K562 (cell line): ENCODE measurements at regions of chr9 and their contacts with region 1.

Region 1: DNA sequence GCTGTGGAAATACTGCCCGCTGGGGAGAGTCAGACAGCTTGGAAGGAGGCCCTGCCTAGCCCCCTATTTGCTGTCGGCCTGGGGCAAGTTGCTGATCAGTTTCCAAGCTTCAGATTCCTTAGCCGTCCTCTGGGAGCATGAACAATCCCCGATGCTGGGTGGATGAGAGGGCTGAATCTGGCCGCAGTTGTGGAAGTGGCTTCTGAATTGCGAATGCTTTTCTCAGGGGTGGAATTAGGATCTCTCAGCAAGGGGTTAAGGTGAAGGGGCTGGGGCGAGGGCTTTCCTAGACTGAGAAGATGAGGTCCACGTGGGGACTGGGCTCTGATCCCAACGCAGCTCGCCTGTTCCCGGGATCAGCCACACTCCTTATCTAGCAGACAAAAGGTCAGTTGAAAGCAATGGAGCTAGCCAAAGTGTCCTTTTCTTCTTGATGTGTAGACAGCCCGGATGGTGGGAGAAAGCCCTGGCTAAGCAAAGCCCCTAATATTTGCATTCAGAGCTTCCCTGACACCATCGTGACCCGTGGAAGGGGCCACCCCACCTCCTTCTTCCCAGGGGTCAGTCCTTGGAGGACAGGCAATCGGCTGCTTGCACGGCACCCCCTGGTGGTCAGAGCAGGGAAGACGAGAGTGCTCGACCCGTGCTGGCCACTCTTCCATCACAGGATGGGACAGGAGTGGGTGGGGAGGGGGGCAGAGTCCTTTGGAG is 54.9 kb downstream of the COL15A1 start:
- DNase-seq: peak; percentile 83 to 87 (median 86)
- ATAC-seq: peak; percentile 98
- H3K4me3 ChIP-seq: no peak overlapping the region
- H3K27ac ChIP-seq: no peak overlapping the region
- H3K4me1 ChIP-seq: peaks cover 24 to 27% of the 10 kb centered on the region in 2 experiments
- H3K27me3 ChIP-seq: 0 out of 5 replicates have a peak, but pooled peaks cover 0 to 4% of the 10 kb centered on the region in 2 experiments
- CTCF ChIP-seq: peak; percentile 85 to 96 (median 93)
- EP300 ChIP-seq: no peak
- POLR2A ChIP-seq: no peak
- RAD21 ChIP-seq: peak; percentile 92 to 97

Region 2: DNA sequence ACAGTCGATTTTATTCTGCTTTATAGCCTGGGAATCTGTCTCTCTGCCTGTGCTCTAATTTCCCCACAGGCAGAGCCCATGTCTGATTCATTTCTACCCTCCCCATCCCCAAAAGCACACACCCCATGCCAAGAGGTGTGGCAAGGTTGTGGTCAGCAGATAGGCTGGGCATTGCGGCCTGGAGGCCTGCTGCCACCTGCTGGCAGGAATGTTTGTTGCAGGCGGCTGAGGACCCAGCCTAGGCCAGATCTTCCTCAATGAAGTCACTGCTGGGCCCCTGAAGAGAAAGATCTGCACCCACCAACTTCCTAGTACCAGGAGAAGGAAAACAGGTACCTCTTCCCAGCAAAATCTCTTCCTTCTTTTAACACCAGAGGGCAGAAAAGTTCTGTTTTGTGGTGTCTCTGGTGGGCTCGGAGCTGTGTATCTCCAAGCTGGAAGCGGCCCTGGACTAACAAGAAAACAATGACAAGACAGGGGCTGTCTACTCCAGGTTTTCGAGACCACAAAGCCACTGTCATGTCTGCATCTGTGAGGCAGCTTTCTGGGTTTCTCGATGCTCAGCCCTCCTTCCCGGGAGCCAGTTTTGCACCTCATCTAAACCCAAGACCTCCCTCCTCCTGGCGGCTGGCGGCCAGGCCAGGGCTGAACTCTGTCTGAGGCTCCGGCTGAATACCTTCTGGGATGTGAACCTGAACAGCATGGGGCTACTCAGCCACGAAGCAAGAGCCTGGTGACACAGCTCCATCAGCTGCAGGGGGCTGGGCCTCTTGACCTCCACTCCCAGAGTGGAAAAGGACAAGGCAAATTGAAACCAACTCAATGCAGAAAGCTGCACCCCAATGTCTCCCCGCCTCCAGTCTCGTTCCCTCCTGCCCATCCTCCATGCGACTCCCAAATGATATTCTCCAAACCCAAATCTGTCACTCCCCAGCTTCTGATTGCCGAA is 207.2 kb before region 1 on chr9:
- CTCF ChIA-PET with region 1: no interaction called
- POLR2A ChIA-PET with region 1: no interaction called
- in situ Hi-C with region 1: no loop called
- intact Hi-C with region 1: loop called (anchors 2 kb)
- DNase-seq: peak; percentile 83 to 86 (median 84)
- ATAC-seq: peak; percentile 88
- H3K4me3 ChIP-seq: no peak overlapping the region
- H3K27ac ChIP-seq: peak overlapping the region; percentile 73
- H3K4me1 ChIP-seq: peaks cover 32% of the 10 kb centered on the region in 2 experiments; a peak in 4 of 5 replicates
- H3K27me3 ChIP-seq: no peaks in the 10 kb centered on the region
- CTCF ChIP-seq: peak; percentile 85 to 98 (median 94)
- EP300 ChIP-seq: no peak
- POLR2A ChIP-seq: no peak
- RAD21 ChIP-seq: peak; percentile 57 to 61

Region 3: GRCh38 chr9:98974994-98975712 is 23.4 kb before region 1 on chr9:
- CTCF ChIA-PET with region 1: interaction called, 6 read pairs
- POLR2A ChIA-PET with region 1: no interaction called
- in situ Hi-C with region 1: no loop called
- intact Hi-C with region 1: loop called (anchors 1 kb)
- DNase-seq: peak; percentile 88 to 91 (median 90)
- ATAC-seq: peak; percentile 92
- H3K4me3 ChIP-seq: peak overlapping the region; percentile 25; the same call in 1 of the 2 replicates
- H3K27ac ChIP-seq: no peak overlapping the region
- H3K4me1 ChIP-seq: peaks cover 27% of the 10 kb centered on the region in 2 experiments; a peak in 4 of 5 replicates
- H3K27me3 ChIP-seq: no peaks in the 10 kb centered on the region
- CTCF ChIP-seq: peak; percentile 99
- EP300 ChIP-seq: no peak
- POLR2A ChIP-seq: no peak
- RAD21 ChIP-seq: peak; percentile 81 to 90

Region 4: DNA sequence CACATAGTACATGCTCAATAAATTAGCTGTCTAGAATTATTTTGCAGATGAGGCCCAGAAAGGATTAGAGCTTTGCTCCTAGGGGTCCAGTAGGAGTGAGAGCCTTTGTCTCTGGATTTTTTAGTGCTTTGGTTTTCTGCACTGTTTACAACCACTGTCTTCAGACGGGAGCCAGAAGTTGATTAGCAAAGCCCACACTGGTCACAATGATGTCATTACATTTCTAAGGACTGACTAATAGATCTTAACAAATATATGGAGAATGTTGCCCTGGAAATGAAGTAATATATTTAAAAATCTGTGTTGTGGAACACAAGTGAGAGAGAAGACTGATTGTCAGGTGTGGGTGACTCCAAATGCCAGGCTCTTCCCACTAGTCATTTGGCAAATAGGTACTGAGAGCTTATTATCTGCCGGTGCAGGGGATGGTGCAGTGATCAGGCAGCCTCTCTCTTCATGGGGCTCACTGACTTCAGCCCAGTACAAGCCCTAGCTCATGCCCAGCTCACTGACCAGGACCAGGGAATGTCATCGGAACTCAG is 21.3 kb after region 1 on chr9:
- CTCF ChIA-PET with region 1: no interaction called
- POLR2A ChIA-PET with region 1: no interaction called
- in situ Hi-C with region 1: no loop called
- intact Hi-C with region 1: no loop called
- DNase-seq: no peak
- ATAC-seq: no peak; the same call in 2 of the 3 replicates
- H3K4me3 ChIP-seq: no peak overlapping the region
- H3K27ac ChIP-seq: no peak overlapping the region
- H3K4me1 ChIP-seq: peaks cover 3 to 11% of the 10 kb centered on the region in 2 experiments; a peak in 4 of 5 replicates
- H3K27me3 ChIP-seq: no peaks in the 10 kb centered on the region
- CTCF ChIP-seq: no peak
- EP300 ChIP-seq: no peak
- POLR2A ChIP-seq: no peak
- RAD21 ChIP-seq: no peak

Region 5: GRCh38 chr9:99140685-99141314 is 142.2 kb after region 1 on chr9:
- CTCF ChIA-PET with region 1: interaction called, 61 read pairs
- POLR2A ChIA-PET with region 1: no interaction called
- in situ Hi-C with region 1: no loop called
- intact Hi-C with region 1: loop called (anchors 1 kb)
- DNase-seq: peak; percentile 60 to 70 (median 66)
- ATAC-seq: peak; percentile 96
- H3K4me3 ChIP-seq: no peak overlapping the region
- H3K27ac ChIP-seq: no peak overlapping the region
- H3K4me1 ChIP-seq: peaks cover 0 to 15% of the 10 kb centered on the region in 2 experiments; a peak in 3 of 5 replicates
- H3K27me3 ChIP-seq: no peaks in the 10 kb centered on the region
- CTCF ChIP-seq: peak; percentile 85 to 88 (median 86)
- EP300 ChIP-seq: no peak
- POLR2A ChIP-seq: no peak
- RAD21 ChIP-seq: peak; percentile 94 to 97